ENCODE measurements at regions of chr11 and their contacts with region 1.

Region 1: GRCh38 chr11:123062158-123062891 is 389 bp upstream of the HSPA8 start:
- DNase-seq: peak; percentile 97 to 100 (median 99)
- ATAC-seq: peak; percentile 84
- H3K4me3 ChIP-seq: peak overlapping the region; percentile 89
- H3K4me3 Mint-ChIP-seq: peak overlapping the region; percentile 91
- H3K27ac ChIP-seq: peak overlapping the region; percentile 100
- H3K27ac Mint-ChIP-seq: peak overlapping the region; percentile 98
- H3K4me1 ChIP-seq: peaks cover 68% of the 10 kb centered on the region
- H3K4me1 Mint-ChIP-seq: peaks cover 75% of the 10 kb centered on the region
- H3K27me3 ChIP-seq: no peaks in the 10 kb centered on the region
- H3K27me3 Mint-ChIP-seq: no peaks in the 10 kb centered on the region
- CTCF ChIP-seq: no peak

Region 2: GRCh38 chr11:121292495-121293287 is 1769.6 kb before region 1 on chr11 and contains the start of gene SC5D:
- CTCF ChIA-PET with region 1: no interaction called
- POLR2A ChIA-PET with region 1: no interaction called
- intact Hi-C with region 1: loop called in 1 of 2 experiments (anchors 5 kb)
- DNase-seq: peak; percentile 88 to 98 (median 94)
- ATAC-seq: peak; percentile 82
- H3K4me3 ChIP-seq: peak within 1 kb of the TSS; percentile 84
- H3K4me3 Mint-ChIP-seq: peak within 1 kb of the TSS; percentile 92
- H3K27ac ChIP-seq: peak within 1 kb of the TSS; percentile 93 to 96
- H3K27ac Mint-ChIP-seq: peak within 1 kb of the TSS; percentile 99
- H3K4me1 ChIP-seq: peaks cover 12% of the 10 kb centered on the region
- H3K4me1 Mint-ChIP-seq: peaks cover 67% of the 10 kb centered on the region
- H3K27me3 ChIP-seq: no peaks in the 10 kb centered on the region
- H3K27me3 Mint-ChIP-seq: no peaks in the 10 kb centered on the region
- CTCF ChIP-seq: no peak
- total RNA-seq, gene SC5D: 87.7 to 92.7 TPM

Region 3: GRCh38 chr11:122505304-122506006 is 556.9 kb before region 1 on chr11:
- CTCF ChIA-PET with region 1: no interaction called
- POLR2A ChIA-PET with region 1: no interaction called
- intact Hi-C with region 1: no loop called
- DNase-seq: peak; percentile 2 to 60 (median 16)
- ATAC-seq: peak; percentile 43
- H3K4me3 ChIP-seq: no peak overlapping the region
- H3K4me3 Mint-ChIP-seq: no peak overlapping the region
- H3K27ac ChIP-seq: no peak overlapping the region
- H3K27ac Mint-ChIP-seq: no peak overlapping the region
- H3K4me1 ChIP-seq: no peaks in the 10 kb centered on the region
- H3K4me1 Mint-ChIP-seq: no peaks in the 10 kb centered on the region
- H3K27me3 ChIP-seq: peaks cover 13 to 27% of the 10 kb centered on the region in 2 experiments
- H3K27me3 Mint-ChIP-seq: peaks cover 65% of the 10 kb centered on the region
- CTCF ChIP-seq: peak; percentile 38

Region 4: DNA sequence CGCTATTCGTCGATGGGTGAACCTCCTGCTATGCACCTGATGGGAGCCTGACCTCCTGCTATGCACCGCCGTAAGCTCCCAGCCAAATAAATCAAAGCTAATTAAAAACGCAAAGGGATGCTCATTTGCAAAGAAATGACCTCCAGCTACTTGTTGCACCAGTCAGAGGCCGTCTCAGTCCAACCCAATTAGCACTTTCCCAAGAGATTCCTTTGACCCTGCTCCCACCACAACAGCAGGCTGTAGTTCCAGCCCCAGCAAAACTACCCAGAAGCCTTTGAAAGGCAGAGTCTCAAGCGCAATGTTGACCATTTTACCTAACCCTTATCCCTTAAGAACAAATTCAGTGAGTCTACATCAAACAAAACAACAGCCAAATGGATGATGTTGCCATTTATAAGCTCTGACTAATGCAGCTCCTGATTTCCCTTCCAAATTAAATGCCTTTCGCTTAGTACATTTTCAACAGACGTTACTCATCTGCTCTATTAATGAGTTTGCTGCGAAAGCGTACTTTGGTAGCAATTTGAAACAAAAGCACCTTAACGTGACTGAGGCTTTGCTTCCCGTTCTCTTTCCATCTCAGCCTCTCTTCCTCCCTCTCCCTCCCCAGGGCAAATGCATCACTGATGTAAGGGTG is 63.5 kb before region 1 on chr11:
- CTCF ChIA-PET with region 1: no interaction called
- POLR2A ChIA-PET with region 1: no interaction called
- intact Hi-C with region 1: no loop called
- DNase-seq: no peak
- ATAC-seq: no peak
- H3K4me3 ChIP-seq: no peak overlapping the region
- H3K4me3 Mint-ChIP-seq: no peak overlapping the region
- H3K27ac ChIP-seq: no peak overlapping the region
- H3K27ac Mint-ChIP-seq: no peak overlapping the region
- H3K4me1 ChIP-seq: no peaks in the 10 kb centered on the region
- H3K4me1 Mint-ChIP-seq: no peaks in the 10 kb centered on the region
- H3K27me3 ChIP-seq: peaks cover 5 to 6% of the 10 kb centered on the region in 2 experiments
- H3K27me3 Mint-ChIP-seq: peaks cover 56% of the 10 kb centered on the region
- CTCF ChIP-seq: no peak

Region 5: DNA sequence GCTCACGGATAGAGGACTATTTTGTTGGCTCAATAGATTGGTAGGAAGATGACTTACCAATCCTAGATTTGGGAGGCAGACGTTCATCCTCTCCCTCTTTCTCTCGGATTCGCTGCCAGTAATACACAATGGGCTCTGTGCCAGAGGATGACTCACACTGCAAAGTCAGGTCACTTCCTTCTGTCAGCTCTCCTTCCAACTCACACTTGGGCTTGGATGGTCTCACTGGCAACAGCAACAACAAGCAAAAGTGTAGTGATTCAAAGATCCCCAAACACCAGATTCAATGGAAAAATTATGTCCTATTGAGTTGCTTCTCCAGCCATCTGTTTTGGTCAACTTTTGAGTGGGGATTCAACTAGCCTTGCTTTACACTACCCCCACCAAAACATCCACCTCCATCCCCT is 21.3 kb after region 1 on chr11:
- CTCF ChIA-PET with region 1: interaction called, 3 read pairs
- POLR2A ChIA-PET with region 1: interaction called, 182 read pairs
- intact Hi-C with region 1: loop called (anchors 2 kb)
- DNase-seq: peak; percentile 42 to 90 (median 70)
- ATAC-seq: peak; percentile 35
- H3K4me3 ChIP-seq: no peak overlapping the region
- H3K4me3 Mint-ChIP-seq: peak overlapping the region; percentile 54
- H3K27ac ChIP-seq: peak overlapping the region in 1 of 2 donors; percentile 21
- H3K27ac Mint-ChIP-seq: peak overlapping the region; percentile 79
- H3K4me1 ChIP-seq: peaks cover 53% of the 10 kb centered on the region
- H3K4me1 Mint-ChIP-seq: peaks cover 46% of the 10 kb centered on the region
- H3K27me3 ChIP-seq: no peaks in the 10 kb centered on the region
- H3K27me3 Mint-ChIP-seq: no peaks in the 10 kb centered on the region
- CTCF ChIP-seq: no peak

Region 6: DNA sequence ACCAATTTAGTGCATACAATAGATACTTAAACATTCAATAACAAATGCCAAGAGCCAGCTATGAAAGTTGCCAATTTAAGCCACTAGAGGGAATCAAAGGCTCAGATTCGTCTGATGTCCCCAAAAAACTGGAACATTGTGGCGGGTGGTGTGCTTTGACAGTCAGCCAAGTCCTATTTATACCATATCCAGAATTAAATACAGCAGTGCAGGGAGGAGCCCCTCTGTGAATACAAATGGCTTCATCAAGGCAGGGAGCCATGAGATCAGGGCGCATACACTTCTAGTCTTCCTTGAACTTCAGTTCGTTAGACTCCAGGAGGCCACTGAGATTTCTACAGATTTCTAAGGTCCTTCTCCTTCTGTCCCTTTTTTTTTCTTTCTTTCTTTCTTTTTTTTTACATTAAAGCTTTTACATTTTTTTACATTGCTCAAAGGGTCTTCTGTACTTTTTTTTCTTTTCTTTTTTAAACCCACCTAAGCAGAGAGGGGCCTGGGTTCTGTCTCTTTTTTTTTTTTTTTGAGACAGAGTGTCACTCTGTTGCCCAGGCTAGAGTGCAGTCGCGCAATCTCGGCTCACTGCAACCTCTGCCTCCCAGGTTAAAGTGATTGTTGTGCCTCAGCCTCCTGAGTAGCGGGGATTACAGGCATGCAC is 41.1 kb after region 1 on chr11:
- CTCF ChIA-PET with region 1: interaction called, 29 read pairs
- POLR2A ChIA-PET with region 1: interaction called, 226 read pairs
- intact Hi-C with region 1: loop called (anchors 5 kb)
- DNase-seq: peak in 10 of 14 experiments; percentile 12 to 73 (median 24)
- ATAC-seq: peak; percentile 75
- H3K4me3 ChIP-seq: no peak overlapping the region
- H3K4me3 Mint-ChIP-seq: no peak overlapping the region
- H3K27ac ChIP-seq: no peak overlapping the region
- H3K27ac Mint-ChIP-seq: peak overlapping the region; percentile 52
- H3K4me1 ChIP-seq: peaks cover 26% of the 10 kb centered on the region
- H3K4me1 Mint-ChIP-seq: peaks cover 30% of the 10 kb centered on the region
- H3K27me3 ChIP-seq: no peaks in the 10 kb centered on the region
- H3K27me3 Mint-ChIP-seq: no peaks in the 10 kb centered on the region
- CTCF ChIP-seq: peak; percentile 69

Region 7: GRCh38 chr11:123246749-123247495 is 184.6 kb after region 1 on chr11:
- CTCF ChIA-PET with region 1: interaction called, 5 read pairs
- POLR2A ChIA-PET with region 1: interaction called, 10 read pairs
- intact Hi-C with region 1: loop called in 1 of 2 experiments (anchors 5 kb)
- DNase-seq: peak; percentile 70 to 89 (median 79)
- ATAC-seq: peak; percentile 92
- H3K4me3 ChIP-seq: no peak overlapping the region
- H3K4me3 Mint-ChIP-seq: no peak overlapping the region
- H3K27ac ChIP-seq: no peak overlapping the region
- H3K27ac Mint-ChIP-seq: no peak overlapping the region
- H3K4me1 ChIP-seq: peaks cover 7% of the 10 kb centered on the region
- H3K4me1 Mint-ChIP-seq: no peaks in the 10 kb centered on the region
- H3K27me3 ChIP-seq: no peaks in the 10 kb centered on the region
- H3K27me3 Mint-ChIP-seq: no peaks in the 10 kb centered on the region
- CTCF ChIP-seq: peak; percentile 95

Measured in CD4-positive, alpha-beta T cell (primary cell).